ENCODE measurements at regions of chr5 and their contacts with region 1.

Region 1: DNA sequence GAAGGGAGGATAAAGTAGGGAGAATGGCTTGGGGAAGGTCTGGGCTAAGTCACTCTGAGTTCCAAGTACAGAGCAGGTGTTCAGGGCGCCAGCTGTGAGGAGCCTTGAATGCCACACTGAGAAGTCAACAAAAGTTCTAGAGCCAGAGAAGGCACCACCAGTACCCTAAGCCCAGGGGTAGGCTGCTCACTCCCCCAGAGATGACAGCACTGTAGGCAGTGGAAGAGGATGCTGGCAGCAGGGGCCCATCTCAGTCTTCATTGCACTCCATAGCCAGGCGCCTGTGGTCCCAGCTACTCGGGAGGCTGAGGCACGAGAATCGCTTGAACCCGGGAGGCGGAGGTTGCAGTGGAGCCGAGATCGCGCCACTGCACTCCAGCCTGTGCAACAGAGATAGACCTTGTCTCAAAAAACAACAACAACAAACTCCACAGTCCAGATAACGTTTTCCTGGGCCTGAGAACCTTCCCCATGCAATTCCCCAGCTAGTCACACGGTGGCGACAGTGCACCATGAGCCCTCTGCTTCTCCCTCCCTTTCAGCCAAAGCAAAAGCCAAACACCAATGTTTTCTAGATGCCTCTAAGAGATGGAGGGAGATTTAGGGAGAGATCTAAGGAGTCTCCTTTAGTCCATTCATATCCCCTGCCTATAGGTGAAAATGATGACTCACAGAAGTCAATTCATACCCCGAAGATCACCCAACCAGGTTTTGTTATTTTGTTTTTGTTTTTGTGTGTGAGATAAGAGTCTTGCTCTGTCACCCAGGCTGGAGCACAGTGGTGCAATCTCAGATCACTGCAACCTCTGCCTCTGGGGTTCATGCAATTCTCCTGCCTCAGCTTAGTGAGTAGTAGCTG is 19.8 kb upstream of the NSD1 start:
- DNase-seq: peak; percentile 60 to 90 (median 78)
- ATAC-seq: peak; percentile 55
- H3K4me3 ChIP-seq: no peak overlapping the region
- H3K4me3 Mint-ChIP-seq: no peak overlapping the region
- H3K27ac ChIP-seq: no peak overlapping the region
- H3K27ac Mint-ChIP-seq: peak overlapping the region; percentile 0
- H3K4me1 ChIP-seq: peaks cover 26% of the 10 kb centered on the region
- H3K4me1 Mint-ChIP-seq: peaks cover 20% of the 10 kb centered on the region
- H3K27me3 ChIP-seq: no peaks in the 10 kb centered on the region
- H3K27me3 Mint-ChIP-seq: no peaks in the 10 kb centered on the region
- CTCF ChIP-seq: peak; percentile 99

Region 2: DNA sequence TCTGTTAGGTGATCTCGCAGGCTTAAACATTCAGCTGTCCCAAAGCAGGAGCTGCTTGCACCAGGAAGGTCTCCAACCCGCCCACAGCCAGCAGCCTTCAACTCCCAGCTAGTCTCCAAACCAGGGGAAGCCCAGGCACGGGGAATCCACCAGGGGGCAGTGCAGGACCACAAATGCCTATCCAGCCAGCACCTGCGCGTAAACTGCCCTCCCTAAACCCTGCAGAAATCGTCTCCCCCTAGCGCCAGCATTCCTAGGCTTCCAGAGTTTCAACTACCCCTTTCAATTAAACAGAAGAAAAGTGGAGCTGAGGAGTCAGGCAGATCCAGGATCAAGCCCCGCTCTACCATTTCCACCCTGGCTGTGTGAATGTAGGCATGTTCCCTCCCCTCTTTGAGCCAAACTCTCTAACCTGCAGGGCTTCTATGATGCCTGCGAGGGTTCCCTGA is 1383.9 kb before region 1 on chr5:
- CTCF ChIA-PET with region 1: no interaction called
- POLR2A ChIA-PET with region 1: no interaction called
- intact Hi-C with region 1: loop called in 1 of 2 experiments (anchors 2 kb)
- DNase-seq: peak; percentile 85 to 96 (median 92)
- ATAC-seq: peak; percentile 98
- H3K4me3 ChIP-seq: no peak overlapping the region
- H3K4me3 Mint-ChIP-seq: no peak overlapping the region
- H3K27ac ChIP-seq: no peak overlapping the region
- H3K27ac Mint-ChIP-seq: no peak overlapping the region
- H3K4me1 ChIP-seq: peaks cover 8% of the 10 kb centered on the region
- H3K4me1 Mint-ChIP-seq: peaks cover 7% of the 10 kb centered on the region
- H3K27me3 ChIP-seq: peaks cover 10% of the 10 kb centered on the region in 2 experiments
- H3K27me3 Mint-ChIP-seq: peaks cover 31% of the 10 kb centered on the region
- CTCF ChIP-seq: peak; percentile 93

Region 3: GRCh38 chr5:176619203-176619568 is 494.6 kb before region 1 on chr5:
- CTCF ChIA-PET with region 1: no interaction called
- POLR2A ChIA-PET with region 1: no interaction called
- intact Hi-C with region 1: no loop called
- DNase-seq: peak; percentile 41 to 88 (median 68)
- ATAC-seq: peak; percentile 98
- H3K4me3 ChIP-seq: peak overlapping the region; percentile 7
- H3K4me3 Mint-ChIP-seq: peak overlapping the region; percentile 57
- H3K27ac ChIP-seq: no peak overlapping the region
- H3K27ac Mint-ChIP-seq: no peak overlapping the region
- H3K4me1 ChIP-seq: peaks cover 23% of the 10 kb centered on the region
- H3K4me1 Mint-ChIP-seq: peaks cover 21% of the 10 kb centered on the region
- H3K27me3 ChIP-seq: peaks cover 46 to 58% of the 10 kb centered on the region in 2 experiments
- H3K27me3 Mint-ChIP-seq: peaks cover 89% of the 10 kb centered on the region
- CTCF ChIP-seq: no peak

Region 4: DNA sequence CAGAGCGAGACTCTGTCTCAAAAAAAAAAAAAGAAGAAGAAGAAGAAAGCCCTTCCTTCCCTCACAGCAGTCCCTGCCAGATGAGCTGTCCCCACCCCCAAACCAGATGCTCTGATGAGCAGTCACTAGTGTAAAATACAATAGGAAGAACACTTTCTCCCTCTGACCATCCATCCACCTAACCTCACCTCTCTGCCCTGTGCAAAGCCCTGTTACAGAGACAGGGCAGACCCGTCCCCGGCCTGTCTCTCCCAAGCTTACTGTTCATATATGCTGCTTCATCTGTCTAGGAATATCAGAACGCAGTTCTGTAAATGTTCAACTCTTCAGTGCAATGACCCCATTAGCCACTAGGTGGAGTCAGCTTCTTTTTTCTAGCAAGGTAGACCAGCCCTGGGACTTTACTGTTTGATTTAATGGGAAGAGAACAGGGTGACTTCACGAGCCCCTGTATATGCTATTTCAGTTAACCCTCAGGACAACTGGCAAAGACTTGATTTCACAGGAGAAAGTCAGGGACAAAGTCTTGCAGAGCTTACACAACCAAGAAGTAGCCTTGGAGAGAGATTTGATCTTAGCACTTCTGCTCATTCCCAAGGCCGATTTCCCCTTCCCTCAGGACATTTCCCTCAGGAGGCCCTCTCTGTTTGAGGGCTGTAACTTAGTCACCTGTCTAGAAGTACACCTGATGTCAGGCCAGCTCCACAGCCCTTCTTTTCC is 42.0 kb before region 1 on chr5:
- CTCF ChIA-PET with region 1: interaction called, 9 read pairs
- POLR2A ChIA-PET with region 1: no interaction called
- intact Hi-C with region 1: loop called in 1 of 2 experiments (anchors 2 kb)
- DNase-seq: peak in 12 of 14 experiments; percentile 45 to 82 (median 60)
- ATAC-seq: peak; percentile 90
- H3K4me3 ChIP-seq: no peak overlapping the region
- H3K4me3 Mint-ChIP-seq: no peak overlapping the region
- H3K27ac ChIP-seq: no peak overlapping the region
- H3K27ac Mint-ChIP-seq: no peak overlapping the region
- H3K4me1 ChIP-seq: peaks cover 4% of the 10 kb centered on the region
- H3K4me1 Mint-ChIP-seq: peaks cover 11% of the 10 kb centered on the region
- H3K27me3 ChIP-seq: no peaks in the 10 kb centered on the region
- H3K27me3 Mint-ChIP-seq: no peaks in the 10 kb centered on the region
- CTCF ChIP-seq: peak; percentile 89

Region 5: GRCh38 chr5:177195307-177195952 is 81.6 kb after region 1 on chr5:
- CTCF ChIA-PET with region 1: interaction called, 8 read pairs
- POLR2A ChIA-PET with region 1: no interaction called
- intact Hi-C with region 1: loop called (anchors 5 kb)
- DNase-seq: no peak
- ATAC-seq: no peak
- H3K4me3 ChIP-seq: no peak overlapping the region
- H3K4me3 Mint-ChIP-seq: no peak overlapping the region
- H3K27ac ChIP-seq: no peak overlapping the region
- H3K27ac Mint-ChIP-seq: peak overlapping the region; percentile 1
- H3K4me1 ChIP-seq: no peaks in the 10 kb centered on the region
- H3K4me1 Mint-ChIP-seq: peaks cover 14% of the 10 kb centered on the region
- H3K27me3 ChIP-seq: no peaks in the 10 kb centered on the region
- H3K27me3 Mint-ChIP-seq: no peaks in the 10 kb centered on the region
- CTCF ChIP-seq: no peak

Region 6: DNA sequence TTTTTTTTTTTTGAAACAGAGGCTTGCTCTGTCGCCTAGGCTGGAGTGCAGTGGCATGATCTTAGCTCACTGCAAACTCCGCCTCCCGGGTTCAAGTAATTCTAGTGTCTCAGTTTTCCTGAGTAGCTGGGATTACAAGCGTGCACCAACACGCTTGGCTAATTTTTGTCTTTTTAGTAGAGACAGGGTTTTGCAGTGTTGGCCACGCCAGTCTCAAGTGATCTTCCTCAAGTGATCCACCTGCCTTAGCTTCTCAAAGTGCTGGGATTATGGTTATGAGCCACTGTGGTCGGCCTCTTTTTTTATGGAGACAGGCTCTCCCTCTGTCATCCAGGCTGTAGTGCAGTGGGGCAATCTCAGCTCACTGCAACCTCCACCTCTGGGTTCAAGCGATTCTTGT is 106.8 kb after region 1 on chr5:
- CTCF ChIA-PET with region 1: interaction called, 6 read pairs
- POLR2A ChIA-PET with region 1: no interaction called
- intact Hi-C with region 1: loop called in 1 of 2 experiments (anchors 5 kb)
- DNase-seq: no peak
- ATAC-seq: no peak
- H3K4me3 ChIP-seq: no peak overlapping the region
- H3K4me3 Mint-ChIP-seq: no peak overlapping the region
- H3K27ac ChIP-seq: no peak overlapping the region
- H3K27ac Mint-ChIP-seq: no peak overlapping the region
- H3K4me1 ChIP-seq: peaks cover 2% of the 10 kb centered on the region
- H3K4me1 Mint-ChIP-seq: peaks cover 44% of the 10 kb centered on the region
- H3K27me3 ChIP-seq: no peaks in the 10 kb centered on the region
- H3K27me3 Mint-ChIP-seq: no peaks in the 10 kb centered on the region
- CTCF ChIP-seq: no peak

Region 7: GRCh38 chr5:177256296-177256695 is 142.5 kb after region 1 on chr5:
- CTCF ChIA-PET with region 1: interaction called, 5 read pairs
- POLR2A ChIA-PET with region 1: no interaction called
- intact Hi-C with region 1: loop called in 1 of 2 experiments (anchors 5 kb)
- DNase-seq: no peak
- ATAC-seq: no peak
- H3K4me3 ChIP-seq: no peak overlapping the region
- H3K4me3 Mint-ChIP-seq: no peak overlapping the region
- H3K27ac ChIP-seq: no peak overlapping the region
- H3K27ac Mint-ChIP-seq: peak overlapping the region; percentile 24
- H3K4me1 ChIP-seq: no peaks in the 10 kb centered on the region
- H3K4me1 Mint-ChIP-seq: peaks cover 5% of the 10 kb centered on the region
- H3K27me3 ChIP-seq: no peaks in the 10 kb centered on the region
- H3K27me3 Mint-ChIP-seq: no peaks in the 10 kb centered on the region
- CTCF ChIP-seq: no peak

Region 8: DNA sequence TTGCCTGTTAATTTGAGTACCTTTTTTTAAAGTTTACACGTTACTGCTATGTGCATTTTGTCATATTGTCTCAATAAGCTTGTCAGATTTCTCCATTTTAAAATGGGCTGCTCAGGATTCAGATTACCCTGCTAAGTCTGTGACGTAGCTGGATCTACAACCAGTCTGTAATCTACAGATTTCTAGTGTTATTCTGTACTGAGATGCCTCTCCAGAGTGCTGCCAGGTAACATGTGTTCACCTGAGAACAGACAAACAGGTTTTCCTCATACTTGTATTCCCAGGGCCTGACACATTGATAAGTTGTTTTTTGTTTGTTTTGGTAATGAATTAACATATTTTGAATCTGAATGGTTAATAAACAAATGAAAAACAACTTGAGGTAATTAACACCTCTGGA is 174.4 kb after region 1 on chr5:
- CTCF ChIA-PET with region 1: no interaction called
- POLR2A ChIA-PET with region 1: no interaction called
- intact Hi-C with region 1: no loop called
- DNase-seq: no peak
- ATAC-seq: no peak
- H3K4me3 ChIP-seq: no peak overlapping the region
- H3K4me3 Mint-ChIP-seq: no peak overlapping the region
- H3K27ac ChIP-seq: no peak overlapping the region
- H3K27ac Mint-ChIP-seq: no peak overlapping the region
- H3K4me1 ChIP-seq: no peaks in the 10 kb centered on the region
- H3K4me1 Mint-ChIP-seq: no peaks in the 10 kb centered on the region
- H3K27me3 ChIP-seq: no peaks in the 10 kb centered on the region
- H3K27me3 Mint-ChIP-seq: no peaks in the 10 kb centered on the region
- CTCF ChIP-seq: no peak

Region 9: DNA sequence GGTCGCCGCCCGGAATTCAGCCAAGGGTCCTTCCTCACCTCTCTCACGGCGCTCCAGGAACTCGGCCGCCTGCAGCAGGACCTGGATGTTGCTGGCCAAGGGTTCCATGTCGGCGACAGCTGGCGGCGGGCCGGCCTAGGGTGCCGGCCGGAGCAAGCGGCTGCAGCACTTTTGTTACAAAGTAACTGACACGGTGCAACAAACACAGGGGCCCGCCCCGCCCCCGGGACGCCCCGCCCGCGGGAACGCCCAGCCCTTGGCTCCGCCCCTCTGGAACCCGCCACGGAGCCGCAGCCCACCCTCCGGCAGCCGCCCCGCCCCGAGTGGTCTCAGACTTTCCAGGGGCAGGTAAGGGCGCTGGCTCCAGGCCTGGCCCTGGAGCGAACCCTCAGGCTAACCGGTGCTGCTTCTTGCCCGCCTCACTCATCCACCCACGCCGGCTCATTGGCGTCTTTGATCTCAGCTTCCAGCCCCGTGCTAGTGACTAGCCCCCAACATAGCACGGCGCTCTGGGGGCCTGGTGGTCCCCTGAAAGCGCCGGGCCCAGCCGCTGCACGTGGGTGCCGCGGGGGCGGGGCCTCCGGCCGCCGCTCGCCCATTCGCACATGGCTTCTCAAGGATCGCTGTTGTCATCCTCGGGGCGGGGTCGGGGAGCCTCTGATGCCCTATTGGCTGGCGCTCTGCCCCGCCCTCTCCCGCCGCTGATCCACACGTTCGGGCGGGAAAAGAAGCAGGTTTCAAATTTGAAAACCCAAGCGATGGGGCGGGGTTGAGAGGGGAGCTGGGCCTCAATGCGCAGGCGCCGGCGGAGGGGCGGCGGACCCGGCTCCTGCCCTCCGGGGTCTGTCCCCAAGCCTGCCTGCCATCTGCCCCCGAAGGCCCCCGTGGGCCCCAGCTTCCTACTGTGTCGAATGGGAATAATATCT is 198.2 kb after region 1 on chr5 and contains the start of gene MXD3:
- CTCF ChIA-PET with region 1: interaction called, 4 read pairs
- POLR2A ChIA-PET with region 1: interaction called, 3 read pairs
- intact Hi-C with region 1: loop called in 1 of 2 experiments (anchors 10 kb)
- DNase-seq: peak; percentile 87 to 96 (median 94)
- ATAC-seq: peak; percentile 93
- H3K4me3 ChIP-seq: peak within 1 kb of the TSS; percentile 69
- H3K4me3 Mint-ChIP-seq: peak within 1 kb of the TSS; percentile 83
- H3K27ac ChIP-seq: peak within 1 kb of the TSS in 1 of 2 donors; percentile 3
- H3K27ac Mint-ChIP-seq: no peak within 1 kb of the TSS
- H3K4me1 ChIP-seq: peaks cover 59% of the 10 kb centered on the region
- H3K4me1 Mint-ChIP-seq: peaks cover 40% of the 10 kb centered on the region
- H3K27me3 ChIP-seq: peaks cover 0 to 3% of the 10 kb centered on the region in 2 experiments
- H3K27me3 Mint-ChIP-seq: peaks cover 6% of the 10 kb centered on the region
- CTCF ChIP-seq: no peak
- total RNA-seq, gene MXD3: 5.8 to 7.5 TPM

Measured in CD4-positive, alpha-beta T cell (primary cell).